GM10248 (cell line): ENCODE measurements at regions of chr13 and their contacts with region 1.

Region 1: GRCh38 chr13:43094901-43095300 is 71.5 kb downstream of the DNAJC15 start:
- DNase-seq: peak; percentile 24
- CTCF ChIP-seq: no peak

Region 2: GRCh38 chr13:42762917-42763658 is 331.8 kb before region 1 on chr13:
- CTCF ChIA-PET with region 1: no interaction called
- POLR2A ChIA-PET with region 1: no interaction called
- DNase-seq: no peak
- CTCF ChIP-seq: no peak

Region 3: DNA sequence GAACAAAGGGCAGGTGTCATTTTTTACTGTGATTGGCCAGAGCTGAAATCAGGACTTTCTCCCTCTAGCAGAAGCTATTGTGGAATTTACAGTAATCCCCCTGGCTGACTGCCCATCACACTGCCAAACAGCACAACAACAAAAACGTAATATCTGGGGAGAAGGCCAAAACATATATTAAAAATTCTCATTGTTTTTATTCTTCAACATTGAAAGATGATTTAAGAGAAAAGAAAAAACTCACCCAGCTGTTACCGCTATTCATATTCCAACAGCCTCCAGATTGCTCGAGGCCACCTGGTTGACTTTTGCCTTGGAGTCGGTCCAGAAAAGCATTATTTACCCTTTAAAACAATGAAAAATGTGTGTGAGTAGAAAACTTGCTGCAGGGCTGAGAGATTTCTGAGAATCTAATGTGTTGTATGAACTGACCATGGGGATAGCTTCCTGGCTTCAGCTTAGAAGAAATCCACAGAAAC is 200.1 kb before region 1 on chr13:
- CTCF ChIA-PET with region 1: no interaction called
- POLR2A ChIA-PET with region 1: no interaction called
- DNase-seq: no peak
- CTCF ChIP-seq: no peak

Region 4: DNA sequence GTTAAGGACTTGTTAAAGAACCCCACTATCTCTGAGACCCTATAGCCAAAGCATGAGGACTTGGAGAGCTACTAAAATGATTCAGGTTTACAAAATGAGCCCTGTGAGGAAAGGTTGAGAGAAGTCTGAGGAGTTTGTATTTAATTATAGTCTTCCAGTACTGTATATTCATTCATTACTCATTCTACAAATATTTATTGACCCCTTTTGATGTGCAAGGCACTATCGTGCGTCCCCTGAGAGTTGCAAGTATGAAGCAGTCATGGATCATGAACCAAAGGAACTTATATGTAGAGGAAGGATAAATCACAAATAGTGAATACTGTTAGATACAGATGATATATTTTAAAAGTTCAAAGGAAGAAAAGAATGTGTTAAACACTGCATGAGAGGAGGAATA is 12.9 kb after region 1 on chr13:
- CTCF ChIA-PET with region 1: interaction called, 13 read pairs
- POLR2A ChIA-PET with region 1: no interaction called
- DNase-seq: no peak
- CTCF ChIP-seq: no peak

Region 5: GRCh38 chr13:43118521-43118920 is 23.6 kb after region 1 on chr13:
- CTCF ChIA-PET with region 1: no interaction called
- POLR2A ChIA-PET with region 1: no interaction called
- DNase-seq: no peak
- CTCF ChIP-seq: no peak

Region 6: DNA sequence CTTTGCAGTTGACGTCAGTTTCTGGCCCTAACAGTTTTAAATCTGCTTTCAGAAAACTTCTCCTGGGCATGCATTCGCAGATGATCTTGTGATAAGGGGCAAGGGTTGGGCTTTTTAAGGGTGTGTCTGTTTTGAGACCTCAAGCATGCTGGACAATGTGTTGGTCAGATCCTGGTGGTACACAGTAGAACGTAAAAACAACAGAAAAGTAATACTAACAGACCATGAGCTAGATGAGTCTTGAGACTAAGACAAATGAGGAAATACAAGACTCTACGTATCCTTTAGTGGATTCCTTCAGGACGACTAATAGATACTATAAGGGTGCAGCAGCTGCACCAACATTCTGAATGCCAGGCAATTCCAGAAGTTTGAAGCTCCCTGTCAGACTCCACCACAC is 166.1 kb after region 1 on chr13:
- CTCF ChIA-PET with region 1: no interaction called
- POLR2A ChIA-PET with region 1: no interaction called
- DNase-seq: no peak
- CTCF ChIP-seq: no peak